ENCODE measurements at regions of chr10 and their contacts with region 1.

Region 1: DNA sequence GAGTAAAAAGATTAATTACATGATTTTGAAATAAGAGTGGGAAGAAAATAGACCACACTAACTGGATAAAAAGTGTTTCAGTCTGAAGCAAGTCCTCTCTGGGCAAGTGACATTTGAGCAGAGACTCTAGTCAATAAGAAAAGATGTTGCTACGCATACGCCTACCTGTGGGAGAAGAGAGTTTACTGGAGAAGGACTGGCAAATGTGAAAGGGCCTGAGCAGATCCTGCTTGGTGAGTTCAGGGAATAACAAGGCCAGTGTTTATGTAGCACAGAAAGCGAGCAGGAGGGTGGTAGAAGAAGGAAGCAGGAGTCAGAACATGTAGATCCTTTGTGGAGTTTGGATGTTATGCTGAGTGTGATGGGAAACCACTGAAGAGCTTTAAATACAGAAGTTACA is 43.4 kb downstream of the RAB18 start:
- DNase-seq: no peak
- H3K4me3 ChIP-seq: no peak overlapping the region
- H3K27me3 ChIP-seq: no peaks in the 10 kb centered on the region
- CTCF ChIP-seq: no peak

Region 2: GRCh38 chr10:27525819-27526218 is 21.7 kb before region 1 on chr10:
- CTCF ChIA-PET with region 1: no interaction called
- POLR2A ChIA-PET with region 1: interaction called, 10 read pairs
- DNase-seq: peak; percentile 46
- H3K4me3 ChIP-seq: no peak overlapping the region
- H3K27me3 ChIP-seq: no peaks in the 10 kb centered on the region
- CTCF ChIP-seq: no peak

Measured in BJ (cell line).